Activated B cell treated with CpG ODN at 0.5 μM for 24 hours (primary cell): ENCODE measurements at regions of chr17 and their contacts with region 1.

Region 1: GRCh38 chr17:42312285-42313130 is 24.2 kb downstream of the STAT5A start:
- DNase-seq: peak; percentile 70
- ATAC-seq: peak; percentile 77
- H3K4me3 Mint-ChIP-seq: peak overlapping the region; percentile 53
- H3K27ac Mint-ChIP-seq: peak overlapping the region; percentile 30
- H3K4me1 Mint-ChIP-seq: peaks cover 55% of the 10 kb centered on the region
- H3K27me3 Mint-ChIP-seq: no peaks in the 10 kb centered on the region
- CTCF ChIP-seq: no peak

Region 2: DNA sequence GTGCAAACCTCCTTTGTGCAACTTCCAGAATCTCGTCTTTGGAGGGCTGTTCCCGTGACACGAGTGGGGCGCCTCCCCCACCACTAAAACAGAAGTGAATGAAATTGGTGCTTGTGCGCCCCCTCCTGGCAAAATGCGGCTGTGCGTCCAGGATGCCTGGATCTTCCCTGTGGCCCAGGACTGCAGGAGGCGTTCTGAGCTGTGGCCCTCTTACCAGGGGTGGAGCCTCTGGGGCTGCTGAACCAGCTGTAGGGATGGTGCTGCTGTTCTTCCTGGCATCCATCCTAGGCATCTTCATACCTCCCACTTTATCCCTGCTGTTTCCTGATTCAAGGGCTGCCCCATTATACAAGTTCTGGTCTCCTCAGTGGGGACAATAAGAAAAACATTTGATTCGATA is 205.0 kb after region 1 on chr17:
- CTCF ChIA-PET with region 1: interaction called, 7 read pairs
- POLR2A ChIA-PET with region 1: no interaction called
- intact Hi-C with region 1: loop called (anchors 2 kb)
- DNase-seq: peak; percentile 75
- ATAC-seq: peak; percentile 92
- H3K4me3 Mint-ChIP-seq: no peak overlapping the region
- H3K27ac Mint-ChIP-seq: no peak overlapping the region
- H3K4me1 Mint-ChIP-seq: peaks cover 7% of the 10 kb centered on the region
- H3K27me3 Mint-ChIP-seq: no peaks in the 10 kb centered on the region
- CTCF ChIP-seq: peak; percentile 64